ENCODE measurements at regions of chr11 and their contacts with region 1.

Region 1: GRCh38 chr11:117026593-117027330 is 71.5 kb downstream of the SIK3 start:
- DNase-seq: no peak
- ATAC-seq: peak; percentile 89
- H3K4me3 Mint-ChIP-seq: no peak overlapping the region
- H3K27ac Mint-ChIP-seq: peak overlapping the region; percentile 83
- H3K4me1 Mint-ChIP-seq: peaks cover 66% of the 10 kb centered on the region
- H3K27me3 Mint-ChIP-seq: no peaks in the 10 kb centered on the region

Region 2: DNA sequence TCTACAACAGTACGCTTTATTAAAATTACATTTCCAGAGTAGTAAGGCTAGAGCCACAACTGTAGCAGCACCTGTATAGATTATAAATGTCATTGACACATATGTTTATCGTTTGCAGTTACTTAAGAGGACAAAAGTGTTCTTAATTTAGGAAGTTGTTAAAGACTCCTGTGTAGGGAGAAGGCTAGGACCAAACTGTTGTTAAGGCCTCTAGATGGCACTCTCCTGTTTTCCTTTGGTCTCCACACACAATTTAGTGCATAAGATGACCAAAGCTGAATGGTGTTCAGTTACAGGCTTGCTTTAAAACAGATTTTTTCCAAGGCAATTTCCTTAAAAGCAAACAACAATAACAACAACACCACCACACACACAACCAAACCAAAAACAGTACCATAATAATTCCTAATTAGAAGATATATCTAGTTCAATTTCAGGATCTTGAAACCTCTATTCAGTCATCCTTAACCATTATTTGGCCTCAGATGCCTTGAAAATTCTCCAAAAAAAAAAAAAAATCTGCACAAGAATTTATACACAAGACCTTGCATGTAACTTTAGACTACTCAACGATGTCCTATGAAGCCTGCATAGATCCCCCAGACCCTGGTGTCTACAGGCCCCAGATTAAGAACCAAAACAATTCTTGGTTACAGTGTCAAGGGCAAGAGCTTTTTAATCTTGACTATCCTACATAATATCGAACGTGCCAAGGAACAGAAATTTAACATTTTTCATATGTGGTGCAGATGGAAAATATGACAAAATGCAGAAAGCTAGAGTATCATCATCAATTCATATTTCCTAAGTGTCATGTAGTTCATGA is 146.7 kb before region 1 on chr11:
- CTCF ChIA-PET with region 1: interaction called, 4 read pairs
- POLR2A ChIA-PET with region 1: no interaction called
- intact Hi-C with region 1: loop called (anchors 2 to 5 kb)
- DNase-seq: no peak
- ATAC-seq: peak; percentile 65
- H3K4me3 Mint-ChIP-seq: no peak overlapping the region
- H3K27ac Mint-ChIP-seq: no peak overlapping the region
- H3K4me1 Mint-ChIP-seq: peaks cover 22% of the 10 kb centered on the region
- H3K27me3 Mint-ChIP-seq: no peaks in the 10 kb centered on the region

Region 3: DNA sequence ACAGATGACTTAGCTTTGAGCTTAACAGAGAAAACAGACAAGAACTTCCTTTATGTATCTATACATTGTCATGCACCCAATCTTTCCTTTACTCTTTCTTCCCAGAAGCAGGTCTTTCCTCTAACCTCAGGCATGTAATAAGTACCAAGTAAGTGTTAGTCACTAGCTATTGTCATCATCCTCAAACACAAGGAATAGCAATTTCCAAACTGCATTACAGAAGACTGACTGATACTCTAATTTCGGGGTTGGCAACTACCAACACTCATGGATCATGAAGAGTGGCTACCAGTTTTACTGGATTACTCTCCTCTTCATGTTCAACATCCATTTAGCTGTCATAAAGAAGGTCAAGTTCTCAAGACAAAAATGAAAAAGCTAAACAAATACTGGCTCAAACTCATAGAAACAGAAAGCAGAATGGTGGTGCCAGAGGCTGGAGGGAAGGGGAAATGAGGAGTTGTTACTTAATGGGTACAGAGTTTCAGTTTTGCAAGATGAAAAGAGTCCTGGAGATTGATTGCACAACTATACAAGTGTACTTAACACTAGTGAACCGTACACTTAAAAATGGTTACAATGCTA is 40.1 kb before region 1 on chr11:
- CTCF ChIA-PET with region 1: interaction called, 3 read pairs
- POLR2A ChIA-PET with region 1: interaction called, 14 read pairs
- intact Hi-C with region 1: loop called (anchors 1 kb)
- DNase-seq: peak; percentile 31
- ATAC-seq: peak; percentile 82
- H3K4me3 Mint-ChIP-seq: peak overlapping the region; percentile 30
- H3K27ac Mint-ChIP-seq: peak overlapping the region; percentile 76
- H3K4me1 Mint-ChIP-seq: peaks cover 71% of the 10 kb centered on the region
- H3K27me3 Mint-ChIP-seq: no peaks in the 10 kb centered on the region

Region 4: DNA sequence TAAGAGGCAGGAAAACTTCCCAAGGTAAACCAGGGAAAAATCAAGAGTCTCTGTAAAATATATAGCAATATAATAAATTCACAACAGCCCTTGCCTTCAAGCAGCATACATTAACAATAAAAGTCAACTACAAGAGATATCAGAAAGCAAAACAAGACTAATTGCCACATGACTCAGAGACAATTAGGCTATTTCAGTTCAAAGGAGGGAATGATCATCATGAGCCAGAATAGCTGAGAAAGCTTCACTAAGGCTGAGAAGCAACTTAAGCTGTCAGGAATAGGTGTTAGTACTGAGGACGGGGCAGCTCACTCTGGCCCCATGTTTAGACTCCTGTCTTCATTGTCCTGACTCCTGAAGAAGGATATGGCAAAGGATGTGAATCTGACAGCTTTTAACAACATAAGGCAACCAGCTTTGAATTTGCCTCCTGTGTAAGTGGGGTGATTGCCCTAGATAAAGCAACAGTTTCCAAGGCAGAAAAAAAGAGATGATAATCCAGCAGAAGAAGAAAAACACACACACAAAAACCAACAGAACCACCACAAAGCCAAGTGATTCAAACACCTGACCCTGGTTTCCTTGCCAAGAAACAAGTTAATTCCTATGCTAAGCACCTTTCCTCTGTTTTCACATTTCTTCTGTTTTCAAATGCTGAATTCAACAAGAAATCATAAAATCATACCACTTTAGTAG is 10.7 kb after region 1 on chr11:
- CTCF ChIA-PET with region 1: interaction called, 4 read pairs
- POLR2A ChIA-PET with region 1: interaction called, 10 read pairs
- intact Hi-C with region 1: loop called (anchors 1 to 2 kb)
- DNase-seq: no peak
- ATAC-seq: peak; percentile 33
- H3K4me3 Mint-ChIP-seq: no peak overlapping the region
- H3K27ac Mint-ChIP-seq: peak overlapping the region; percentile 61
- H3K4me1 Mint-ChIP-seq: peaks cover 49% of the 10 kb centered on the region
- H3K27me3 Mint-ChIP-seq: no peaks in the 10 kb centered on the region

Region 5: DNA sequence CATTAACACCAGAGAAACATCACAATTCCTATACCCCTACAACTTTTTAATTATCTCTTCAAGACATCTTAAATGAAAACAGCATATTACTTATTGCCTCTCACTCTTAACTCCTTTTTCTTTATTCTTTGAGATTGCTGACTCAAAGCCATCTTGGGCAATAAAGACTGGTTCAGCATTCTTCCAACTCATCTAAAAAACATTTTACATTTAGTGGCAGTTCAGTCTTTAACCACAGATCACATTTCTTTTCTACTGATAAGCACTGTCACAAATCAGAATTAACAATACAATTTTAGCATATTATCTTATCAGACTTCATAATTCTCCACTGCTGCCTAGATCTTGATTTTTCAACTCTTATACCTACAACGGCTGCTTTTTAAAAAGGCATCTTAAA is 37.5 kb after region 1 on chr11:
- CTCF ChIA-PET with region 1: interaction called, 4 read pairs
- POLR2A ChIA-PET with region 1: interaction called, 8 read pairs
- intact Hi-C with region 1: loop called (anchors 1 kb)
- DNase-seq: no peak
- ATAC-seq: no peak
- H3K4me3 Mint-ChIP-seq: peak overlapping the region; percentile 26
- H3K27ac Mint-ChIP-seq: peak overlapping the region; percentile 28
- H3K4me1 Mint-ChIP-seq: peaks cover 63% of the 10 kb centered on the region
- H3K27me3 Mint-ChIP-seq: no peaks in the 10 kb centered on the region

Region 6: DNA sequence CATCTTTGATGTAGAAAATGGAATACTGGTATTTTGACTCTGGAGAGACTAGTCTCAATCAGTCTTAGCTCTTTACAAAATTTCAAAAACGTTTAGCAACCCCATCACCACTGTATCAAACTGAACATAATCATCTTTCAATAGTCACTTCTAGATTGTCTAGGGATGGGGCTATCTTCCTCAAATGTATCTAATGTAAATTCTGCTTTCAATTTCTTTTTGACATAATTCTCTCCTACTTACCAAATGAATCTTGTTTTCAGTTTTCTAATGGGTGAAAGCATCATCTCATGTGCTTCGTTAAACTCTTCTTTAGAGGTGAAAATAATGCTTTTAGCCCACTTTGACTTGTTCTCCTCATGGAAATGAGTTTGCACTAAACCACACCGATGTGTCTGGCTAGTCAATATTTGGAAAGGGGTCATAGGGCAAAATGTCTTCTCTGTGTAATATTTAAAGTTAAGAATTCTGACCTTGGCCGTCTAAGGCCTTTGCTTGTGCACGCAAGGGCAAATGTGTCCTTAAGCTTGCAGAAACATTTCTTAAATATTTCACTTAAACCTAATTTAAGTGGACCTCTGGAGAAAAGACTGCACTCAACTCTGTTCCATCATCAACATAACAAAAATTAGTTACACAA is 66.3 kb after region 1 on chr11:
- CTCF ChIA-PET with region 1: interaction called, 3 read pairs
- POLR2A ChIA-PET with region 1: interaction called, 7 read pairs
- intact Hi-C with region 1: loop called (anchors 1 to 2 kb)
- DNase-seq: no peak
- ATAC-seq: peak; percentile 77
- H3K4me3 Mint-ChIP-seq: peak overlapping the region; percentile 32
- H3K27ac Mint-ChIP-seq: peak overlapping the region; percentile 76
- H3K4me1 Mint-ChIP-seq: peaks cover 82% of the 10 kb centered on the region
- H3K27me3 Mint-ChIP-seq: no peaks in the 10 kb centered on the region

Region 7: DNA sequence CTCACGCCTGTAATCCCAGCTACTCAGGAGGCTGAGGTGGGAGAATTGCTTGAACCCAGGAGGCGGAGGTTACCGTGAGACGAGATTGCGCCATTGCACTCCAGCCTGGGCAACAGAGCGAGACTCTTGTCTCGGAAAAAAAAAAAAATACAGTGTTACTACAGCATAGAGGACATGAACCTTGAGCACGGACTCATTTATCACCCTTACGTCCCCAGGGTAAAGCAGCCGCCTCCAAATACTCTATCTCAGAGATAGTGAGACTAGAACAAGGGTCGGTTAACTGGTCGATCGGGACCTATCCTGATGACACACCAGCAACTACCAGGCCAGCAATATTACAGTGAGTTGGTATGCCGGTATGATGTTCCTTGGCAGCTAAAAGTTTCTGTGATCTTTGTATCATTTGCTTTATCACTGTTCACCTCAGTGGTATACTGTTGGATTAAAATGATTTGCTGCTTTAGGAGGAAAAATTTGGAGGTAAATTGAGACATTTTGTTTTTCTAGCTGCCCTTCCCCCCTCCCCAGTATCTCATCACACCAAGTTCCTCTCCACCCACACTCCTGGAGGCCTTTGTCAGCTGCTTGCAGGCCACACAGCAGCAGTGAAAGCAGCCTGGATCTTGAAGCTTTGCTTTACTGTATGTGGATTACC is 144.8 kb after region 1 on chr11:
- CTCF ChIA-PET with region 1: no interaction called
- POLR2A ChIA-PET with region 1: no interaction called
- intact Hi-C with region 1: no loop called
- DNase-seq: no peak
- ATAC-seq: peak; percentile 30
- H3K4me3 Mint-ChIP-seq: no peak overlapping the region
- H3K27ac Mint-ChIP-seq: peak overlapping the region; percentile 47
- H3K4me1 Mint-ChIP-seq: peaks cover 15% of the 10 kb centered on the region
- H3K27me3 Mint-ChIP-seq: no peaks in the 10 kb centered on the region

Region 8: GRCh38 chr11:118448294-118448693 is 1421.5 kb after region 1 on chr11:
- CTCF ChIA-PET with region 1: no interaction called
- POLR2A ChIA-PET with region 1: no interaction called
- intact Hi-C with region 1: loop called in 1 of 2 experiments (anchors 5 kb)
- DNase-seq: peak; percentile 10
- ATAC-seq: peak; percentile 64
- H3K4me3 Mint-ChIP-seq: no peak overlapping the region
- H3K27ac Mint-ChIP-seq: no peak overlapping the region
- H3K4me1 Mint-ChIP-seq: peaks cover 73% of the 10 kb centered on the region
- H3K27me3 Mint-ChIP-seq: no peaks in the 10 kb centered on the region

Measured in activated CD4-positive, alpha-beta T cell treated with anti-CD3 and anti-CD28 coated beads for 36 hours (primary cell).